AG04450 (cell line): ENCODE measurements at regions of chr1 and their contacts with region 1.

Region 1: DNA sequence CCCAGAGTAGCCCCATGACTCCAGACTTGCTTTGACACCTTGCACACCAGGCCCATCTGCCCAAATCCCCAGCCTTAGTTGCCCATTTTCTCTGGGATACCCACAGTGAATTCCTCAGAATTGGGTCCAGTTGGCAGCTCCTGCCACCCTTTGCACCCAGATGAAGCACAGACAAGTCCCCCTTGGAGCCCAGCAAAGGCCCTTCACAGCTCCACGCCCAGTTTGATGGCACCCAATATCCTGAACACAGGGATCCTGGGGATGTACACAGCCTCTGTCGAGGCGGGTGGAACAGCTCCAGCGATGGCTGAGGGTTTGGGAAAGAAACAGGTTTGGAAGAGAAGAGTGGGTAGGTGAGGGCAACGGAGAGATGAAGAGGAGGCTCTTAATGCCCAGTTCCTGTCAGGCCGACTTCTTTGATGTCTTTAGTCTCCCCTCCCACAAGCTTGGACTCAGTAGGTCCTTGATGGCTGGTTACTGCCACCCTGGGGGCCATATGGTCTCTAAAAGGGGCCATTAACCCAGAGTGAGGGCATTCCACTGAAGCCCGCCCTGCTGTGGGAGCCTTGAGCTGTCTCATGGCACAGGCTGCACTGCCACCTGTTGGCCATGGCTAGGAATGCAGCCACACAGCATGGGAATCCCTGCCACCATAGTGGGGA is 21.7 kb downstream of the TMEM53 start:
- DNase-seq: no peak
- H3K4me3 ChIP-seq: no peak overlapping the region
- H3K27ac ChIP-seq: no peak overlapping the region
- H3K27me3 ChIP-seq: no peaks in the 10 kb centered on the region
- CTCF ChIP-seq: peak; percentile 98

Region 2: GRCh38 chr1:44377925-44378784 is 274.4 kb before region 1 on chr1:
- CTCF ChIA-PET with region 1: interaction called, 55 read pairs
- POLR2A ChIA-PET with region 1: no interaction called
- DNase-seq: peak; percentile 16
- H3K4me3 ChIP-seq: no peak overlapping the region
- H3K27ac ChIP-seq: no peak overlapping the region
- H3K27me3 ChIP-seq: peaks cover 30% of the 10 kb centered on the region
- CTCF ChIP-seq: peak; percentile 81

Region 3: GRCh38 chr1:44594871-44595746 is 57.5 kb before region 1 on chr1:
- CTCF ChIA-PET with region 1: interaction called, 19 read pairs
- POLR2A ChIA-PET with region 1: no interaction called
- DNase-seq: no peak
- H3K4me3 ChIP-seq: no peak overlapping the region
- H3K27ac ChIP-seq: no peak overlapping the region
- H3K27me3 ChIP-seq: peaks cover 32% of the 10 kb centered on the region
- CTCF ChIP-seq: peak; percentile 95

Region 4: GRCh38 chr1:44616991-44617702 is 35.4 kb before region 1 on chr1:
- CTCF ChIA-PET with region 1: interaction called, 221 read pairs
- POLR2A ChIA-PET with region 1: interaction called, 3 read pairs
- DNase-seq: no peak
- H3K4me3 ChIP-seq: peak overlapping the region; percentile 42
- H3K27ac ChIP-seq: no peak overlapping the region
- H3K27me3 ChIP-seq: peaks cover 15% of the 10 kb centered on the region
- CTCF ChIP-seq: no peak

Region 5: DNA sequence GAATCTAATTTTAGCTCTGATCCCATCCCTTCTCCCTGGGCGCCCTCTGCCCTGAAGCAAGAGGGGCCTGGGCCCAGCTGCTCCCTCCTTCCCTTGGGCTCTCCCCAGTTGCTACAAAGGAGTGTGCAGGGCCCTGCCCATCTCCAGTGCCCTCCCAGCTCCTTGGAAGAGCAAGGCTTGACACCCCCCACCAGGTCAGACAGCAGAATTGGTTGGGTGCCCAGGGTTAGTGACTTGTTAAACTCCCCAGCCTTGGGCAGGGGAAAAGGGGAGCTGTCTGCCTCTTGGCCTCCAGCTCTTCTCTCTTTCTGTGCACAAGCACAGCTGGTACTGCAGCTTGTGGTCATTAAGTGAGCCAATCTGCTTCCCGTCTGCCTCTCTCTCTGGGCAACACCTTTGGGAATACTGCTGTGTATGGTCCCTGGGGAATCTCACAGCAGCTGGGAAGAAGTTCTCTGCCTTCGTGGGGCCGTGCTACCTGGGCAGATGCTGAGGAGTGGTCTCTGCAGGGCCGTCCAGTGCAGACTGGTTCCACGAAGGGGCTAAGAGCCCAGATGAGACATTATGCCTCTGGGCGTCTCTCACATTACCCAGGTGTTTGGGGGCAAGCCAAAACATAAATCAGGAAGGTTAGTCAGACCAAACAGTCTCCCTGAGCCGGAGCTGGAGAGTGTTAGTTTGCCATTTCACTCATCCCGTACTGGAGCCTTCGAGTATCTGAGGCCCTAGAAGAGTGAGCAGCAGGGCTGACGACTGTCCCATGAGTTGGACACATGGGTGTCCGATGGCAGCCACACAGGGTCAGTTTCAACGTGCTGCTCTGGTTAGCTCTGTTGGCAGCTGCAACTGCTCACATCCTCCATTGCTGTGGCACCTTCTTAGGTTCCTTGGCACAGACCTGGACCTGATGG is 15.6 kb before region 1 on chr1:
- CTCF ChIA-PET with region 1: interaction called, 43 read pairs
- POLR2A ChIA-PET with region 1: interaction called, 3 read pairs
- DNase-seq: no peak
- H3K4me3 ChIP-seq: no peak overlapping the region
- H3K27ac ChIP-seq: no peak overlapping the region
- H3K27me3 ChIP-seq: no peaks in the 10 kb centered on the region
- CTCF ChIP-seq: no peak

Region 6: DNA sequence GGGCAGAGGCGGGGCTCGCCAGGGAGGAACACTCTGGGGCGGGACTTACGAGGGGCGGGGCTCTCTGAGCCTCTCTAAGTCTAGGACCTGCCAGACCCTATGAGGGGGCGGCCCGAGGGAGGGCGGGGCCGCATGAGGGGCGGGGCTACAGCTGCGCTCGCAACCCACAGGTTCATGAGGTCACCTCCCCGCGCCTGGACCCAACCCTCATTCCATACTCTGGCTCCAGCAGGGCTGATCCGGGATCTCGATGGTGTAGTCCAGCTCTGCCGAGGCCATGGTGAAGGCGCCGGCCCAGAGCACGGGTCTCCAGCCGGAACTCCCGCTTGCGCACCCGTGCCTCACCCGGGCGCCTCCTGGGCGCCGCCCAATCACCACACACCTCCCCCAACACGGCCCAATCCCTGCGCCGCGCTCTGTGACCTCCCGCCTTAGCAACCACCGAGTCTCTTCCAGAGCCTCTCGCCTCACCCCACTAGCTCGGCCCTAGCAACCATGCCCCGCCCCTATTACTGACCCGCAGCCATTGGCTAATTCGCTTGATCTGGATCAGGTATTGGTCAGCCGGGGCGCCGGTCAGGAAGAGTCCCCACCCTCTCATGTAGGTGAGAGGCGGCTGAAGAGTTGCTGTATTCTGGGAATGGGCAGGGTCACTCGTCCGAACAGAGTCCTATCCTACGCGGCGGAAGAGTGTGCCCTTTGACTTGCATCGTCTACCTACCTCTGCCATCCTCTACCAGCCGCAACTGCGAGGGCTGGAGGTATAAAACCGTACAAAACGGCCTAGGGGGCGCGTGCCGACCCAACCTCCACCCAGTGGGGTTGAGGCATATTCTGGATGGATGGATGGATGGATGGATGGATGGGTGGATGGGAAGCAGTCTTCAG is 21.8 kb after region 1 on chr1 and contains the starts of genes ARMH1 and TMEM53:
- CTCF ChIA-PET with region 1: interaction called, 24 read pairs
- POLR2A ChIA-PET with region 1: no interaction called
- DNase-seq: peak; percentile 97
- H3K4me3 ChIP-seq: peak within 1 kb of the TSS; percentile 91
- H3K27ac ChIP-seq: peak within 1 kb of the TSS; percentile 92
- H3K27me3 ChIP-seq: no peaks in the 10 kb centered on the region
- CTCF ChIP-seq: no peak
- polyA plus RNA-seq, gene ARMH1: 2.7 and 3.4 TPM in 2 replicates
- polyA plus RNA-seq, gene TMEM53: 4.4 and 6.1 TPM in 2 replicates

Region 7: DNA sequence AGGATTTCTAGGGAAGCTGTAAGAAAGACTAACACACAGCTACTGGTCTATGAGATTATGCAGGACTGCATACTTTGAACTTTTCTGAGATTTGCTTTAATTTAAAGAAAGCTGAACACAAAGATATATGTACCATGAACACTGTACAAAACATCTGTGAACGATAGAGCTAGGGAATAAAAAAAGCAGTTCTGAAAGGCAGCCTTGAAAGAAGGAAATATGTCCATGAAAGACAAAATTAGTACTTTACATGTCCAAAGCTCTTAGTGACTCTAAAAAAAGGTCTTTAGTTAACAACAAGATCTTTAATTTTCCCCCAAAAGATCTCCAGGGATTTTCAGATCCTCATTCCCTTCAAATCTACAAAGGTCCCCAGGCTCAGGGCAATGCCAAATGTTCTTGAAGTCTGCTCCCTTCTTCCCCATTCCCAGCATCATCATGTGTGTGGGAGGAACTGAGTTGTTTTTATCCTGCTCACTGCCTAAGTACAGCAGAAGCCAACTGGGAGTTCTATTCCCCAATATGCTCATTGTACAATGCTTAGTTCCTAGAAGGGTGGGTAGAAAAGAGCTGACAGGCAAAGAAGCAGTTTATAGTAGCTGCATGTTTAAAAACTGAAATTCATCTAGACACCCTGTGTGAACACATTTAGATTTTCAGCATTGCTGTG is 250.6 kb after region 1 on chr1:
- CTCF ChIA-PET with region 1: no interaction called
- POLR2A ChIA-PET with region 1: no interaction called
- DNase-seq: no peak
- H3K4me3 ChIP-seq: no peak overlapping the region
- H3K27ac ChIP-seq: no peak overlapping the region
- H3K27me3 ChIP-seq: no peaks in the 10 kb centered on the region
- CTCF ChIP-seq: no peak